ENCODE measurements at regions of chr1 and their contacts with region 1.

Region 1: DNA sequence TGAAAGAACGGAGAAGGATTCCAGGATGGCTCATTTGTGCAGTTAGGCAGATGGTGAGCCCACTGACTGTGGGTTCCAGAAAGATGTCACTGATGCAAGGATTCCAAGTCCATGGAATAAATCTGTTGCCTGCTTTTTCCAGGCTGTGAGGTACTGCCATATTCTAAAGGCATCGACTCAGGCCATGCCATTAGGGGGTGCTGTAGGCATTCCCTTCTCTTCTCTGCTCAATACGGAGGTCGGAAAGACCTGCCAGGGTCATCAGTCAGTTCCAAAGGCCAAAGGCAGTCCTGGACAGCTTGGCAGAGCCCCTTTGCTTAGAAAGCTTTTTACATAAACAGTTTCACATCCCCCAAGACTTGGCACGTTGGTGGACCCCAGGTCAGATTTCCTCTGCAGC is 31.7 kb upstream of the TMEM125 start:
- DNase-seq: peak; percentile 53
- H3K4me3 Mint-ChIP-seq: no peak overlapping the region
- H3K27ac Mint-ChIP-seq: no peak overlapping the region
- H3K4me1 Mint-ChIP-seq: no peaks in the 10 kb centered on the region
- H3K27me3 Mint-ChIP-seq: peaks cover 1% of the 10 kb centered on the region

Region 2: GRCh38 chr1:43300378-43301094 is 62.5 kb after region 1 on chr1 and contains the start of gene TIE1:
- CTCF ChIA-PET with region 1: no interaction called
- POLR2A ChIA-PET with region 1: no interaction called
- intact Hi-C with region 1: no loop called
- DNase-seq: no peak
- H3K4me3 Mint-ChIP-seq: no peak within 1 kb of the TSS
- H3K27ac Mint-ChIP-seq: no peak within 1 kb of the TSS
- H3K4me1 Mint-ChIP-seq: peaks cover 6% of the 10 kb centered on the region
- H3K27me3 Mint-ChIP-seq: no peaks in the 10 kb centered on the region
- total RNA-seq, gene TIE1: not detected

Region 3: GRCh38 chr1:43358746-43359693 is 120.9 kb after region 1 on chr1 and contains the start of gene CDC20:
- CTCF ChIA-PET with region 1: no interaction called
- POLR2A ChIA-PET with region 1: no interaction called
- intact Hi-C with region 1: loop called (anchors 1 kb)
- DNase-seq: peak; percentile 100
- H3K4me3 Mint-ChIP-seq: peak within 1 kb of the TSS; percentile 84
- H3K27ac Mint-ChIP-seq: peak within 1 kb of the TSS; percentile 74
- H3K4me1 Mint-ChIP-seq: peaks cover 28% of the 10 kb centered on the region
- H3K27me3 Mint-ChIP-seq: no peaks in the 10 kb centered on the region
- total RNA-seq, gene CDC20: 152 to 155 TPM

Region 4: GRCh38 chr1:43414634-43415223 is 176.6 kb after region 1 on chr1:
- CTCF ChIA-PET with region 1: interaction called, 14 read pairs
- POLR2A ChIA-PET with region 1: no interaction called
- intact Hi-C with region 1: loop called (anchors 1 kb)
- DNase-seq: peak; percentile 65
- H3K4me3 Mint-ChIP-seq: no peak overlapping the region
- H3K27ac Mint-ChIP-seq: no peak overlapping the region
- H3K4me1 Mint-ChIP-seq: no peaks in the 10 kb centered on the region
- H3K27me3 Mint-ChIP-seq: no peaks in the 10 kb centered on the region

Measured in activated CD4-positive, alpha-beta memory T cell treated with anti-CD3 and anti-CD28 coated beads for 36 hours (primary cell).